ENCODE measurements at regions of chr4 and their contacts with region 1.

Region 1: GRCh38 chr4:83455281-83456129 is at the starts of genes HELQ and MRPS18C:
- DNase-seq: peak; percentile 99
- H3K4me3 Mint-ChIP-seq: peak within 1 kb of the TSS; percentile 98
- H3K27ac Mint-ChIP-seq: peak within 1 kb of the TSS; percentile 100
- H3K4me1 Mint-ChIP-seq: peaks cover 17% of the 10 kb centered on the region
- H3K27me3 Mint-ChIP-seq: no peaks in the 10 kb centered on the region
- CTCF ChIP-seq: peak; percentile 38
- total RNA-seq, gene HELQ: 12.8 and 14.4 TPM in 2 replicates
- total RNA-seq, gene MRPS18C: 93.0 and 106 TPM in 2 replicates

Region 2: GRCh38 chr4:83334425-83335241 is 120.9 kb before region 1 on chr4 and contains the start of gene HPSE:
- CTCF ChIA-PET with region 1: interaction called, 5 read pairs
- POLR2A ChIA-PET with region 1: interaction called, 19 read pairs
- intact Hi-C with region 1: loop called (anchors 1 kb)
- DNase-seq: peak; percentile 92
- H3K4me3 Mint-ChIP-seq: peak within 1 kb of the TSS; percentile 81
- H3K27ac Mint-ChIP-seq: peak within 1 kb of the TSS; percentile 47
- H3K4me1 Mint-ChIP-seq: peaks cover 15% of the 10 kb centered on the region
- H3K27me3 Mint-ChIP-seq: no peaks in the 10 kb centered on the region
- CTCF ChIP-seq: no peak
- total RNA-seq, gene HPSE: 5.5 and 6.0 TPM in 2 replicates

Region 3: GRCh38 chr4:83356899-83357661 is 98.4 kb before region 1 on chr4:
- CTCF ChIA-PET with region 1: interaction called, 7 read pairs
- POLR2A ChIA-PET with region 1: interaction called, 17 read pairs
- intact Hi-C with region 1: loop called (anchors 1 kb)
- DNase-seq: peak; percentile 90
- H3K4me3 Mint-ChIP-seq: peak overlapping the region; percentile 35
- H3K27ac Mint-ChIP-seq: peak overlapping the region; percentile 96
- H3K4me1 Mint-ChIP-seq: no peaks in the 10 kb centered on the region
- H3K27me3 Mint-ChIP-seq: no peaks in the 10 kb centered on the region
- CTCF ChIP-seq: no peak

Region 4: DNA sequence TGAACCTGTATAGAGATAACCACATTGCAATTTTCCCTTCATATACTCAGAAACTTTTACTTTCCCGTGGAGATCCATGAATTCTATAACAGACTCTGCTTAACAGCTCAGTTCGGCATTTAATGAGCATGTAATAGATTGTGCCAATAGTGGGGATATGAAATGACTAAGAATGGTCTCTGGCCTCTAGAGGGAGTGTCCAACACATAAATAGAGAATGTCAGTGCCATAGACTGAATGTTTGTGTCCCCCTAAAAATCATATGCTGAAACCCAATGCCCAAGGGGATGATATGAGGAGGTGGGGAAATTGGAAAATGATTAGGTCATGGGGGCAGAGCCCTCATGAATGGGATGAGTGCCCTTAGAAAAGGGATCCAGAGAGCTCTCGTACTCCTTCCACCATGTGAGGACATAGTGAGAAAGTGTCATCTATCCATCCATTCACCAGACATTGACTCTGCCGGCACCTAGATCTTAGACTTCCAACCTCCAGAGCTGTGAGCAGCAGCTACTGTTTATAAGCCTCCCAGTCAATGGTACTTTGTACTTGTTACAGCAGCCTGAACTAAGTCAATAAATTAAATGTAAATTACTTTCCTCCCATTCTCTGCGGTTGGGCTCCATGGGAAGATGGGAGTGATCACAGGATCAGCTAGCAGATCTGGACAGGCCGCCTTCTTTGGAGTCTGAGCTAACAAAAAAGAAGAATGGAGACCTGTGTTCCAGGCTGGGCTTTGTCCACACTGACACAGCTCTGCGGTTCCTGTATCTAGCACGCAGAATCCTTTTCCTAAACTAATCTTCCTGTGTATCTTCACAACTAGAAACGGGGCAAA is 92.8 kb before region 1 on chr4:
- CTCF ChIA-PET with region 1: interaction called, 7 read pairs
- POLR2A ChIA-PET with region 1: interaction called, 17 read pairs
- intact Hi-C with region 1: loop called (anchors 1 kb)
- DNase-seq: peak; percentile 51
- H3K4me3 Mint-ChIP-seq: no peak overlapping the region
- H3K27ac Mint-ChIP-seq: no peak overlapping the region
- H3K4me1 Mint-ChIP-seq: no peaks in the 10 kb centered on the region
- H3K27me3 Mint-ChIP-seq: no peaks in the 10 kb centered on the region
- CTCF ChIP-seq: peak; percentile 35

Region 5: DNA sequence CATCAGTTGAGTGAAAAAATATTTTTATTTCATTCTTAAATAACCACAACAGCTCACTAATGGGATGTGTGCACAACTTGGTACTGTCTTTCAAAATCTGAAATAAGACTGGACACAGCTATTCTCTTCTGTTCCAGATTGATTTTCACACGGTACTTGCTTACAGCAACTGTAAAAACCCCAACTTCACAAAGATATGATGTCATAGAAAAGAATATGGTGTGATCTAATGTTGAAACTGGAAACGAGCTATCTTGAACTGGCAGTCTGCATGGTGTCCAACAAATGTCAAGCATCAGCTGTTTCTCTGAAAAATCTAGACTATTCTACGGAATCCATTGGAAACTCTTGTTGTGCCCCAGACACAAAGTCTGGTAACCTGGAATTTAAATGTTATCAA is 14.6 kb before region 1 on chr4:
- CTCF ChIA-PET with region 1: interaction called, 4 read pairs
- POLR2A ChIA-PET with region 1: interaction called, 14 read pairs
- intact Hi-C with region 1: no loop called
- DNase-seq: no peak
- H3K4me3 Mint-ChIP-seq: no peak overlapping the region
- H3K27ac Mint-ChIP-seq: no peak overlapping the region
- H3K4me1 Mint-ChIP-seq: no peaks in the 10 kb centered on the region
- H3K27me3 Mint-ChIP-seq: no peaks in the 10 kb centered on the region
- CTCF ChIP-seq: no peak

Region 6: GRCh38 chr4:83484500-83485461 is 29.3 kb after region 1 on chr4 and contains the start of gene ABRAXAS1:
- CTCF ChIA-PET with region 1: no interaction called
- POLR2A ChIA-PET with region 1: interaction called, 22 read pairs
- intact Hi-C with region 1: no loop called
- DNase-seq: peak; percentile 94
- H3K4me3 Mint-ChIP-seq: peak within 1 kb of the TSS; percentile 96
- H3K27ac Mint-ChIP-seq: peak within 1 kb of the TSS; percentile 78
- H3K4me1 Mint-ChIP-seq: no peaks in the 10 kb centered on the region
- H3K27me3 Mint-ChIP-seq: no peaks in the 10 kb centered on the region
- CTCF ChIP-seq: no peak
- total RNA-seq, gene ABRAXAS1: 5.7 and 7.3 TPM in 2 replicates

Measured in MCF 10A (cell line).